ENCODE measurements at regions of chr1 and their contacts with region 1.

Region 1: DNA sequence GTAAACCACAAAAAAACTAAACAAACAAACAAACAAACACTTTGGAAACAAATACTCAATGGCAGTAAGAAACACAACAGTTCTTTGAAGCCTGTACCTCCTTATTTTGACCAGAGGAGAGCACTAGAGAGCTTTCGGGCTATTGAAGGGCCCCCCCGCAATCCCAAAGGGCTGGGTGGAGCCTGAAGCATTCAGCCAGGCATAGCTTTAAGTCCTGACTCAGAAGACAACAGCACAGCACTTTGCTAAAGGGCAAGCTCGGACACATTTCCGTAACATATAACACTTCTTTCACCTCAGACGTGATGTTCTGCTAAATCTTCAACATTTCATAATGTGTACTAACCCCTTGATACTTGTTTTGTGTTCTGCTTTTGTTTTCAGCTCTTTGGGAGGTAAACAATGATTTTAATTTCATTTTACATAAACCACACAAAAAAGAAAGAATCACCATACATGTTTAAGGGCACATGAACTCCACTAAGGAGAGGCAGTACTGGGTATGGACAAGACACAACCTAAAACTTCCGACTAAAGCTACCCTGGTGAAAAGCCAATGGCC is 9.7 kb upstream of the SHCBP1L start:
- DNase-seq: peak; percentile 81
- H3K4me3 ChIP-seq: peak overlapping the region in 1 of 4 donors; percentile 9
- H3K27ac ChIP-seq: peak overlapping the region in 3 of 4 donors; percentile 34 to 71 (median 39)
- H3K4me1 ChIP-seq: peaks cover 0 to 7% (median 0%) of the 10 kb centered on the region in 4 donors
- H3K27me3 ChIP-seq: no peaks in the 10 kb centered on the region
- CTCF ChIP-seq: peak; percentile 86 to 90 (median 89)
- EP300 ChIP-seq: no peak
- POLR2A ChIP-seq: no peak

Region 2: GRCh38 chr1:183023601-183024316 is 61.1 kb after region 1 on chr1:
- in situ Hi-C with region 1: no loop called
- intact Hi-C with region 1: loop called (anchors 10 kb)
- DNase-seq: peak; percentile 84
- H3K4me3 ChIP-seq: peak overlapping the region; percentile 77 to 88 (median 86)
- H3K27ac ChIP-seq: peak overlapping the region; percentile 96 to 99 (median 97)
- H3K4me1 ChIP-seq: peaks cover 0 to 33% (median 8%) of the 10 kb centered on the region in 4 donors
- H3K27me3 ChIP-seq: peaks cover 10% of the 10 kb centered on the region
- CTCF ChIP-seq: peak; percentile 46 to 72 (median 56)
- EP300 ChIP-seq: no peak
- POLR2A ChIP-seq: peak; percentile 25

Region 3: DNA sequence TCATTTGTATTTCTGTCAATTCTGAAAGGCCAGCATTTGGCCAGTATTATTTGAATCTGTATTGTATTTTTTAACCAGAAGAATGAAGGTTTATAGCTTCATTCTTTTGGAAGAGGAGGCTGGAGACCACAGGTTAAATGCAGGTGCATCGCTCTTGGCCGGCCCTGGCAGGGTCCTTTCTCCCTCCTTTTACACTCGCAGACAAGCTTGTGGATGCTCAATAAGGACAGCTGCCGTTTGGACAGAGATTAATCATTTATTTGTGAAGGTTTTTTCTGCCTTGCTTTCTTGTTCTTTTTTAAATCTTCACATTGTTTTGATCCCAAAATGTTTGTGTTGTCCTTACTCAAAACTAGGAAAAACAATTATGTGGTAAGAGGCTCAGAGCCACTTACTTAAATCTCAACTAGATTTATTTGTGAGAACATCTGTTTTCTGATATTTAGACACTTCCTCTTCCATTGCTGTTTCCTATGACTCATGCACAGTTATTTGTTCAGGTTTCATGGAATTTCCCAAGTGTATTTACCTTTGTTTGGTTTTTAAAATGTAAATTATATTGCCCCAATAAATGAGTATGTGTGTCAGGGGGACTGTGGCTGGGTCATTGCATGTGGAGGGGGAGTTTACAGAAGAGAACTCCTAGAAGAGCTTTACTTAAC is 176.8 kb after region 1 on chr1:
- in situ Hi-C with region 1: no loop called
- intact Hi-C with region 1: loop called (anchors 10 kb)
- DNase-seq: no peak
- H3K4me3 ChIP-seq: no peak overlapping the region
- H3K27ac ChIP-seq: peak overlapping the region; percentile 66 to 80 (median 74)
- H3K4me1 ChIP-seq: peaks cover 6 to 34% (median 15%) of the 10 kb centered on the region in 4 donors
- H3K27me3 ChIP-seq: no peaks in the 10 kb centered on the region
- CTCF ChIP-seq: no peak
- EP300 ChIP-seq: no peak
- POLR2A ChIP-seq: no peak

Region 4: DNA sequence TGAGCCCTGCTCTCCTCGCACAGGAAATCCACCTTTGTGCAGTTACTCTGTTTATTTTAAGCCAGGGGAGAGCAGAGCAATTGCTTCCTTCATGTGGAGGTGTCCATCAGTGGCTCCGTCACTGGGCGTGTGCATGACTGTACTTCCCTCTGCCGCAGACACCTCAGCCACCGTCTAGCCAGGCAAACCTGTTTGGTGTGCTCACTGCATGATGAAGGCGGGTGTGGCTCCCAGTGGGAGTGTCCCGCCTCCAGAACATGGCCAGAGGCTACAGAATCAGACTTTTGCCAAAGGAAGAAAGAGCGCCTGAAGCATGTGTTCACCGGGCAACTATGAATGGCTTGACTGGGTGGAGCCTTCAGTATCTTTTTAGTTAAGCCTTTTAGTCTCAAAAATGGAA is 197.3 kb after region 1 on chr1:
- in situ Hi-C with region 1: no loop called
- intact Hi-C with region 1: no loop called
- DNase-seq: peak; percentile 91
- H3K4me3 ChIP-seq: no peak overlapping the region
- H3K27ac ChIP-seq: peak overlapping the region; percentile 14 to 60 (median 45)
- H3K4me1 ChIP-seq: peaks cover 0 to 4% (median 0%) of the 10 kb centered on the region in 4 donors
- H3K27me3 ChIP-seq: no peaks in the 10 kb centered on the region
- CTCF ChIP-seq: no peak
- EP300 ChIP-seq: no peak
- POLR2A ChIP-seq: no peak

Region 5: DNA sequence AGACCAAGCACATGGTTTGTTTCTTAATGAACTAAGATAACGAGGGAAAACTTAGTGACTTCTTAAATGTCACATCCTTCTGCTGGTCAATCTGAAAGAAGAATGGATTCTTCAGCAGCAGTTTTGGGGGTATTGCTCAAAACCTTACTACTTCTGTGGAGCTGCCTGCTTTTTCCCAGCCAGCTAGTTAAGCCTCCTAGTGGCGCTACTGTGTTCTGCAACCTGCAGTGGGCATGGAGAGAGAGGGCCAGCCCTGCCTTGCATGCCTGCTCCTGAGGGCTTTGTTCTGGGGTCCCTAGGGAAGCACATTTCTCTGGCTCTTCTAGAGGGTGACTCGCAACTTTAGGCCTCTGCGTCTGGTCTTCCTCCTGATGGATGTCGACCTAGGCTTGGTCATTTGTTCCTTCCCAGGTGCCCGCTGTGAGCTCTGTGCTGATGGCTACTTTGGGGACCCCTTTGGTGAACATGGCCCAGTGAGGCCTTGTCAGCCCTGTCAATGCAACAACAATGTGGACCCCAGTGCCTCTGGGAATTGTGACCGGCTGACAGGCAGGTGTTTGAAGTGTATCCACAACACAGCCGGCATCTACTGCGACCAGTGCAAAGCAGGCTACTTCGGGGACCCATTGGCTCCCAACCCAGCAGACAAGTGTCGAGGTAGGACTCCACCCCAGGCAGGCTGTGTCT is 265.5 kb after region 1 on chr1:
- in situ Hi-C with region 1: loop called (anchors 10 to 25 kb)
- intact Hi-C with region 1: loop called (anchors 10 kb)
- DNase-seq: peak; percentile 56
- H3K4me3 ChIP-seq: no peak overlapping the region
- H3K27ac ChIP-seq: no peak overlapping the region
- H3K4me1 ChIP-seq: peaks cover 0 to 8% (median 2%) of the 10 kb centered on the region in 4 donors
- H3K27me3 ChIP-seq: no peaks in the 10 kb centered on the region
- CTCF ChIP-seq: peak; percentile 62 to 75 (median 67)
- EP300 ChIP-seq: no peak
- POLR2A ChIP-seq: no peak

Region 6: DNA sequence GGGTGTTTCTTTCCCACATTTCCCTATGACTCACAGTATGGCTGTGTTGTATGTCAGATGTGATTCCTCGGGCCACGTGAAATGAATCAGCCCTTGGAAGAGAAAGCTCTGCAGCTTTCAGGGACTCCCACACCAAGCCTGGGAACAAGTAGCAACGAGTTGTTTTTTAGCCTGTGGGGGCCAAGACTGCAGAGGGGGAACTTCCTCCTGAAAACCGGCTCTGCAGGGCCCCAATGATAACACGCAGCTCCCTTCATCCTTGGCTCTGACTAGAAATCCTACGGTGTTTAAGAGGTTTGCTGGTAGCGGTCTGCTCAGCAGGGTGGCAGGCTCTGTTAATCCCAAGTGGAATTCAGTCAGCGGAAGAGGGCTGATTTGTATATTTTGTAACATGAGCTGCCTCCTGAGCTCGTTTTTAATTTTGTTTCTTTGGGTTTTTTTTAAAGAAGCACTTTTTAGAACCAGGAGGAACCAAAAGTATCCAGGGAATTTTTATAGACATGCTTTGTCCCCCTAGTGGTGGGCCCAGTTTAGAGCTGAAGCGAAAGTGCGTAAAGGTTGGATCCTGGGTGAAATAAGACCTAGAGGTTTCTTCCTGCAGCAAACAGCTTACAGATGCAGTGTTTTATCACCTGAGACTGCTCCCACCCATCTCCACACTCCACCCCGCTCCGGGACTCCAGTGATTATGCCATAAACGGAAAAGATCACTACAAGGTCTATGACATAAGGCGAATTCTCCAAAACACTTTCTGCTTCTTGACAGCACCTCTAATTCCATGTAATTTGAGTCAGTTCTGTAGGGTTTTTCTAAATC is 272.2 kb after region 1 on chr1:
- in situ Hi-C with region 1: loop called in 3 of 4 experiments (anchors 25 kb)
- intact Hi-C with region 1: loop called (anchors 10 kb)
- DNase-seq: peak; percentile 33
- H3K4me3 ChIP-seq: peak overlapping the region in 2 of 4 donors; percentile 12 to 19
- H3K27ac ChIP-seq: peak overlapping the region; percentile 76 to 86 (median 80)
- H3K4me1 ChIP-seq: peaks cover 0 to 14% (median 0%) of the 10 kb centered on the region in 4 donors
- H3K27me3 ChIP-seq: no peaks in the 10 kb centered on the region
- CTCF ChIP-seq: peak; percentile 51 to 76 (median 61)
- EP300 ChIP-seq: no peak
- POLR2A ChIP-seq: no peak

Region 7: DNA sequence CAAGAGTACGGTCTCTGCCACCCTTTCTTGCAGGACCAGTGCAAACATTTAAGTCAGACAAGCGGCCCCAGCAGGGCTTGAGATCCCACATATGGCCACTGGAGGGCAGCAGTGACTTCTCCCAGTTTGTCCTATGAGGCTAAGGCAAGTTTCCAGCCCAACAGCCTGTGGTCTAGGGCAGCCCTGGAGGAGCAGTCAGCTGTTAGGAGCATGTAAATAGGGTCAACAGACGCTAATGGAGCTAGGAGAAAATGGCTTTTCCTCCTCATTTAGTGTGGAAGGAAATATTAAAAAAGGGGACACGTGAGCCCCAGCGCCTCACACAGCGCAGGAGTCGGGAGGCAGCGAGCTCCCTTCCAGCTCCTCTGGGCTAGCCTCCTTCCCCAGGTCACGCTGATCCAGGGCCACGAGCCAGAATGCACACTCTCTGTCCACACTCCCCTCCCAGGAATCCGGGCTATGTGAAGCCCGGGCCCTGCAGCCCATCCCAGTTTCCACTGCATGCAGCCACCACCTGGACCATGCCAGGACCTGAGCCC is 319.0 kb after region 1 on chr1:
- in situ Hi-C with region 1: loop called in 1 of 4 experiments (anchors 10 kb)
- intact Hi-C with region 1: no loop called
- DNase-seq: peak; percentile 89
- H3K4me3 ChIP-seq: no peak overlapping the region
- H3K27ac ChIP-seq: peak overlapping the region; percentile 14 to 76 (median 68)
- H3K4me1 ChIP-seq: peaks cover 0 to 20% (median 5%) of the 10 kb centered on the region in 4 donors
- H3K27me3 ChIP-seq: no peaks in the 10 kb centered on the region
- CTCF ChIP-seq: peak; percentile 88 to 93 (median 90)
- EP300 ChIP-seq: no peak
- POLR2A ChIP-seq: no peak